ENCODE measurements at regions of chr20 and their contacts with region 1.

Region 1: DNA sequence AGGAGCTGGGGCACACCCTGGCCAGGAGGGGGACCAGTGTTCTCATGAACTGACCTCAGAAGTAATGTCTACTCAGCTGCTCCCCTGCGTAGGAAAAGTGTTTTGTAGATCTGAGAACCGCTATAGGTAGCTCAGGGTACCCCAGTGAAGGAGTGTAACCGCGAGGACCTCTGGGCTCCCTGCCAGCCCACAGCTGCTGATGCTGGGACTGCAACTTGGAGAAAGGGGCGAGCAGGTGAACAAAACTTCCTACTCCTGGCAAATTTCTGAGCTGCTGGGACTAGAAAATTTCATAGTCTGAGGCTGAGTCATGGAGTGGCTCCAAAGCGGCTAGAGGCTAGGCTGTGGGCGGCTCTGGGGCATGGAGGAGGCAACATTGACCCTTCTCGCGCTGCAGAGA is 51.9 kb downstream of the PYGB start:
- DNase-seq: no peak
- H3K4me3 ChIP-seq: no peak overlapping the region
- H3K27ac ChIP-seq: no peak overlapping the region
- H3K4me1 ChIP-seq: peaks cover 1 to 9% of the 10 kb centered on the region in 2 donors
- H3K27me3 ChIP-seq: no peaks in the 10 kb centered on the region
- CTCF ChIP-seq: no peak
- POLR2A ChIP-seq: no peak

Region 2: GRCh38 chr20:25178563-25179438 is 121.0 kb before region 1 on chr20:
- intact Hi-C with region 1: no loop called
- DNase-seq: peak; percentile 49 to 54
- H3K4me3 ChIP-seq: no peak overlapping the region
- H3K27ac ChIP-seq: peak overlapping the region; percentile 11 to 56 (median 30)
- H3K4me1 ChIP-seq: peaks cover 7 to 18% of the 10 kb centered on the region in 2 donors
- H3K27me3 ChIP-seq: no peaks in the 10 kb centered on the region
- CTCF ChIP-seq: peak; percentile 37 to 98 (median 87)
- POLR2A ChIP-seq: no peak

Region 3: GRCh38 chr20:25399037-25399430 is 99.2 kb after region 1 on chr20:
- intact Hi-C with region 1: loop called (anchors 5 kb)
- DNase-seq: peak; percentile 34 to 41
- H3K4me3 ChIP-seq: no peak overlapping the region
- H3K27ac ChIP-seq: no peak overlapping the region
- H3K4me1 ChIP-seq: peaks cover 8 to 13% of the 10 kb centered on the region in 2 donors
- H3K27me3 ChIP-seq: no peaks in the 10 kb centered on the region
- CTCF ChIP-seq: peak; percentile 10 to 73 (median 60)
- POLR2A ChIP-seq: no peak

Region 4: DNA sequence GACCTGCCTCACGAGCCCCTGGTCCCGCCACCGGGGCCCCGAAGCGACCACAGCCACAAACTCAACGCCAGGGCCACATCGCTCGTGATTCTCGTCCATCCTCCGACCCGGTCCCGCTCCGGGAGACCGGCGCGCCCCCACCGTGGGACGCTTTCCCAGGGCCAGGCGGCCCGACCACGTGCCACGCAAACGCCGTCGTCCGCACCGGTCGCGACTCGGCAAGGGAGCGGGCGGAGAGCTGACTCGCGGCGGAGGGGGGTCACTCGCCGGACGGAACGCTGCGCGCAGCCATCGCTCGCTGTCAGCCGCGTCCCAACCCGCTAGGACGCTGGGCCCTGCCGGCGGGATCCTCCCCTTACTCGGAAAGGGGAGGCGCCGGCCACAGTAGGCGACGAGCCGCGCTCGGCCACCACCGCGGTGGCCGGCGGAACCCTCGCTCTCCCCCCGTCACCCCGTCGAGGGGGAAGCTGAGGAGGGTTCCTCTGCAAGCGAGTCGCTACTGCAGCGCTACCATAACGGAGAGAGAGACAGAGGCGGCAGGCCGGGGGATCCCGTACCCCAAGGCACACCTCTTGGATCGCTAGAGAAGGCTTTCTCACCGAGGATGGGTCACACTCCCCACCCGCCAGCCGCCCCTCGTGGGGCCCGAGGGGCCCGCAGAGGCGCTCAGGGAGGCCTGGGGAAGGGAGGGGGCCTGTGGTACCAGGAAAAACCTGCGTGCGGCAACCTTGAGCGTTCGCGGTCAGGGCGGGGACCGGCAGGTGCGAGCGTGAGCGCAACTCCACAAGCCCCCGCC is 908.7 kb after region 1 on chr20:
- intact Hi-C with region 1: no loop called
- DNase-seq: peak; percentile 11 to 40
- H3K4me3 ChIP-seq: peak overlapping the region in 2 of 3 donors; percentile 9 to 22
- H3K27ac ChIP-seq: no peak overlapping the region
- H3K4me1 ChIP-seq: peaks cover 9 to 17% of the 10 kb centered on the region in 2 donors
- H3K27me3 ChIP-seq: peaks cover 18% of the 10 kb centered on the region
- CTCF ChIP-seq: no peak
- POLR2A ChIP-seq: no peak